ENCODE measurements at regions of chr6 and their contacts with region 1.

Region 1: GRCh38 chr6:73180763-73181619 is 44.3 kb downstream of the KHDC1L start:
- DNase-seq: no peak
- ATAC-seq: peak in 6 of 8 donors; percentile 59 to 79 (median 74)
- H3K4me3 ChIP-seq: peak overlapping the region in 5 of 10 donors; percentile 15 to 37 (median 30)
- H3K27ac ChIP-seq: no peak overlapping the region
- H3K4me1 ChIP-seq: peaks cover 0 to 4% (median 0%) of the 10 kb centered on the region in 9 donors
- H3K27me3 ChIP-seq: peaks cover 0 to 16% (median 0%) of the 10 kb centered on the region in 7 donors
- CTCF ChIP-seq: peak; percentile 24 to 76 (median 70)

Region 2: GRCh38 chr6:73309769-73310502 is 128.9 kb after region 1 on chr6:
- intact Hi-C with region 1: loop called in 1 of 10 experiments (anchors 10 kb)
- DNase-seq: peak; percentile 26 to 60
- ATAC-seq: peak; percentile 80 to 96 (median 94)
- H3K4me3 ChIP-seq: peak overlapping the region; percentile 40 to 67 (median 52)
- H3K27ac ChIP-seq: peak overlapping the region in 1 of 10 donors; percentile 62
- H3K4me1 ChIP-seq: peaks cover 0 to 22% (median 13%) of the 10 kb centered on the region in 9 donors
- H3K27me3 ChIP-seq: peaks cover 0 to 52% (median 40%) of the 10 kb centered on the region in 7 donors
- CTCF ChIP-seq: peak in 5 of 9 donors; percentile 9 to 42 (median 41)